ENCODE measurements at regions of chr1 and their contacts with region 1.

Region 1: DNA sequence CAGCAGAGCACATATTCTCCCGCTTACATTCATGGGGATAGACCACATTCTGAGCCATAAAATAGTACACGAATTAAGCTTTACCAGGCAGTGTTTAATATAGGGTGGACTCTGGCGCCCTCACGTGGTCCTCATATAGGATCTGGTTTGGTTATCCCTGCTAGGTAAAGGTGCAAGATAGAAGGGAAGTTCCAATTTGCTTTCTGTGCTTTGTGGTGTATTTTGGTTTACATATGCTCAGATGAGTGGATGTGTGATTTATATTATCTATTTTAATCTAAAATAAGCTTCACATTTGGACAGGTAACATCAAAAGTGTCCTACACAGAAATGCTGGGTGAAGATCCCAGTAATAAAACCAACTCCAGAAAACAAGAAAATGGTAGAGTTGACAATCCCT is 3.6 kb downstream of the CR1 start:
- DNase-seq: peak; percentile 80
- H3K4me3 Mint-ChIP-seq: no peak overlapping the region
- H3K27ac Mint-ChIP-seq: no peak overlapping the region
- H3K4me1 Mint-ChIP-seq: peaks cover 22% of the 10 kb centered on the region
- H3K27me3 Mint-ChIP-seq: peaks cover 48% of the 10 kb centered on the region

Region 2: GRCh38 chr1:206856674-206857464 is 642.7 kb before region 1 on chr1:
- CTCF ChIA-PET with region 1: no interaction called
- POLR2A ChIA-PET with region 1: no interaction called
- intact Hi-C with region 1: loop called (anchors 5 kb)
- DNase-seq: peak; percentile 38
- H3K4me3 Mint-ChIP-seq: no peak overlapping the region
- H3K27ac Mint-ChIP-seq: peak overlapping the region; percentile 1
- H3K4me1 Mint-ChIP-seq: peaks cover 22% of the 10 kb centered on the region
- H3K27me3 Mint-ChIP-seq: no peaks in the 10 kb centered on the region

Region 3: DNA sequence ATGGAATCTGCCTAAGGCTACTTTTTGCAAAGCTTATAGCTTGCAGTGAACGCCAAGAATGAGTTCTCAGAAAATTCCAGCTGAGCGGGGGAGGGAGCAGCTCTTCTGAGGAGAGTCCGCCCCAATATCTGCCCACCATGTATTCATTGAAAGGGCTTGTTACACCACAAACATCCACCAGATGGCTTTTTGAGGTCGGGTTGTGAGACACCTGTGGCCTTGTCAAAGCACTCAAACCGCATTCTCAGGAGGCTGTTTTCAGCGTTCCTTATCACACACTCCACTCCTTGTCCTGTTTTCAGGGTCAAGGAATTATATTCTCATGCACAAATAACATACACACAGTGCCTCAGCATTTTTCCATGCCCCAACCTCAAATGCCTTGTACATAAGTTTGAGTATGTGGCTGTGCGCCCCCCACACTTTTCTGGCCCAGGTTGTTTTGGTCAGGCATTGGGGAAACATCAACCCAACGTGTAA is 414.8 kb before region 1 on chr1:
- CTCF ChIA-PET with region 1: interaction called, 62 read pairs
- POLR2A ChIA-PET with region 1: no interaction called
- intact Hi-C with region 1: loop called (anchors 1 kb)
- DNase-seq: peak; percentile 60
- H3K4me3 Mint-ChIP-seq: no peak overlapping the region
- H3K27ac Mint-ChIP-seq: no peak overlapping the region
- H3K4me1 Mint-ChIP-seq: peaks cover 14% of the 10 kb centered on the region
- H3K27me3 Mint-ChIP-seq: peaks cover 23% of the 10 kb centered on the region

Region 4: GRCh38 chr1:207321079-207321789 is 178.3 kb before region 1 on chr1 and contains the start of gene CD55:
- CTCF ChIA-PET with region 1: interaction called, 4 read pairs
- POLR2A ChIA-PET with region 1: interaction called, 5 read pairs
- intact Hi-C with region 1: loop called (anchors 1 kb)
- DNase-seq: peak; percentile 99
- H3K4me3 Mint-ChIP-seq: peak within 1 kb of the TSS; percentile 92
- H3K27ac Mint-ChIP-seq: peak within 1 kb of the TSS; percentile 96
- H3K4me1 Mint-ChIP-seq: peaks cover 33% of the 10 kb centered on the region
- H3K27me3 Mint-ChIP-seq: no peaks in the 10 kb centered on the region
- total RNA-seq, gene CD55: 40.4 to 42.3 TPM

Region 5: GRCh38 chr1:207404849-207405525 is 94.6 kb before region 1 on chr1:
- CTCF ChIA-PET with region 1: interaction called, 30 read pairs
- POLR2A ChIA-PET with region 1: no interaction called
- intact Hi-C with region 1: loop called (anchors 1 kb)
- DNase-seq: no peak
- H3K4me3 Mint-ChIP-seq: no peak overlapping the region
- H3K27ac Mint-ChIP-seq: no peak overlapping the region
- H3K4me1 Mint-ChIP-seq: peaks cover 13% of the 10 kb centered on the region
- H3K27me3 Mint-ChIP-seq: peaks cover 5% of the 10 kb centered on the region

Region 6: DNA sequence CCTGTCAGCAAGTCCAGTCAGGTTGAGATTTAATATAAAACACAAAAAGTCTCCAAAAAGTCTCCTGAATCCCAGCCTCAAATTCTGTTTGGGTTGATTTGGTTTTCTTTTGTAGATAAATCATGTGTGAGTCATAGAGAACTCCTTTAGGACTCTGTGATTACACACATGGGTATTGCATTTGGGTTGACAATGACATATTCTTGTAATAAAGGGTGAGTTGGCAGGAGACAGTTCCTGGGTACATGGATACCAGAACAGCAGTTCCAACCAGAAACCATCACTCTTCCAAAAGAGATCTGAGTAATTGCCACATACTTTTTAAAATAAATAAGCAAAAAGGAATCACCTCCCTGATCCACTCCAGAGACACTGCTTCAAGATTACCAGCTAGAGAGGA is 36.6 kb before region 1 on chr1:
- CTCF ChIA-PET with region 1: interaction called, 3 read pairs
- POLR2A ChIA-PET with region 1: no interaction called
- intact Hi-C with region 1: loop called (anchors 1 kb)
- DNase-seq: no peak
- H3K4me3 Mint-ChIP-seq: no peak overlapping the region
- H3K27ac Mint-ChIP-seq: no peak overlapping the region
- H3K4me1 Mint-ChIP-seq: peaks cover 30% of the 10 kb centered on the region
- H3K27me3 Mint-ChIP-seq: peaks cover 10% of the 10 kb centered on the region

Region 7: DNA sequence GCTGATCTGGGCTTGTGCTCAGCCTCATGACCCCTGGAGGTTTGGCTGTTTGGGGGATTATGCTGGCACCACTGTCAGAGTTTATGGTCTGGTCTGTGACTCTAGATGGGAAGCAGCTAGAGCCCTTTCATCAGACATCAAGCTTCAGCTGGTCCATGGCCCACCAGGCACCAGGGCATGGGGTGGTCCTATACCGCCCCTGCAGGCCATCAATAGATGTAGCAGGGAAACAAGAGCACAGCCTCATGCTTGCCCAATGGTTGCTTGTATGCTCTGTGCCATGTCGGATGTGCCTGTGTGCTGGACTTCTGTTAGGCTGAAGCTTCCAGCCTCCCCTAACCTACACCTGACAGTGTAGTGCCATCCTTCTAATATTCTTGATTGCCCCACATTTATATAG is 482.4 kb after region 1 on chr1:
- CTCF ChIA-PET with region 1: no interaction called
- POLR2A ChIA-PET with region 1: no interaction called
- intact Hi-C with region 1: no loop called
- DNase-seq: no peak
- H3K4me3 Mint-ChIP-seq: no peak overlapping the region
- H3K27ac Mint-ChIP-seq: no peak overlapping the region
- H3K4me1 Mint-ChIP-seq: no peaks in the 10 kb centered on the region
- H3K27me3 Mint-ChIP-seq: peaks cover 20% of the 10 kb centered on the region

Measured in activated CD4-positive, alpha-beta memory T cell treated with anti-CD3 and anti-CD28 coated beads for 36 hours (primary cell).